ENCODE measurements at regions of chr2 and their contacts with region 1.

Region 1: GRCh38 chr2:212665948-212666347 is 127.3 kb upstream of the ERBB4 start:
- DNase-seq: no peak
- H3K4me3 ChIP-seq: no peak overlapping the region
- H3K27ac ChIP-seq: no peak overlapping the region
- H3K4me1 ChIP-seq: no peaks in the 10 kb centered on the region
- H3K27me3 ChIP-seq: no peaks in the 10 kb centered on the region
- CTCF ChIP-seq: no peak
- EP300 ChIP-seq: no peak
- POLR2A ChIP-seq: no peak

Region 2: DNA sequence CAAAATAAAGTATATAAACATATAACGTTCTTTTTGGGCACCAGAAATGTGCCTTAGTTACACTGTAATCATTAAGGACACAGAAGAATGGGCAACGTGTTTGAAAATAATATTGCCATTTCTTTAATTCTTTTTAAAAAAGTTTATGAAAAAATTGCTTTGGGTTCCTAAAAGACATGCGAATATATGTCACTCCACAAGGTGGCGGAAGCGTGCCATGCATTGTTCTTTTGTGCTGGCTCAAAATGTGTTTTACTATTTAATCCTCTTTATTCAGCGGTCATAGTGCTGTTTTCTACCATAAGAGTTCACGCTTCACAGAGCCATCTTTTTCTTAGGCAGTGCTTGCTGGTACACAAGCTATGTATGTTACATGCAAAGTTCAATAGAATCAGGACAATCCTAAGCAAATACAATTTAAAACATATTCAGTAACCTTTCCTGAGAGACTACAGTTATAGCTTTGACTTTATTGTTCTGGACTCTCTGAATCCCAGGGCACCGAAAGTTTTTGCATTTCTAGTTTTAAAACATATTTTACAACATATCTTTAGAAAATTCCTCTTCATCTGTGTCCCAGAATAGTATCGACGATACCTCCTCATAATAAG is 20.4 kb after region 1 on chr2:
- in situ Hi-C with region 1: no loop called
- intact Hi-C with region 1: loop called (anchors 2 kb)
- DNase-seq: peak; percentile 48
- H3K4me3 ChIP-seq: no peak overlapping the region
- H3K27ac ChIP-seq: no peak overlapping the region
- H3K4me1 ChIP-seq: no peaks in the 10 kb centered on the region
- H3K27me3 ChIP-seq: no peaks in the 10 kb centered on the region
- CTCF ChIP-seq: peak; percentile 60 to 90 (median 70)
- EP300 ChIP-seq: no peak
- POLR2A ChIP-seq: no peak

Measured in transverse colon (tissue), 4 donors.